GM12878 (cell line): ENCODE measurements at regions of chr22 and their contacts with region 1.

Region 1: GRCh38 chr22:41589391-41590241 is at the start of gene PMM1:
- DNase-seq: peak; percentile 98
- ATAC-seq: peak; percentile 98
- H3K4me3 ChIP-seq: peak within 1 kb of the TSS; percentile 94
- H3K27ac ChIP-seq: peak within 1 kb of the TSS; percentile 66
- H3K4me1 ChIP-seq: peaks cover 3% of the 10 kb centered on the region; the same call in 1 of the 2 replicates
- H3K27me3 ChIP-seq: no peaks in the 10 kb centered on the region
- CTCF ChIP-seq: no peak
- EP300 ChIP-seq: no peak
- POLR2A ChIP-seq: peak; percentile 96
- RAD21 ChIP-seq: no peak
- polyA plus RNA-seq, gene PMM1: 10.5 to 16.1 TPM

Region 2: DNA sequence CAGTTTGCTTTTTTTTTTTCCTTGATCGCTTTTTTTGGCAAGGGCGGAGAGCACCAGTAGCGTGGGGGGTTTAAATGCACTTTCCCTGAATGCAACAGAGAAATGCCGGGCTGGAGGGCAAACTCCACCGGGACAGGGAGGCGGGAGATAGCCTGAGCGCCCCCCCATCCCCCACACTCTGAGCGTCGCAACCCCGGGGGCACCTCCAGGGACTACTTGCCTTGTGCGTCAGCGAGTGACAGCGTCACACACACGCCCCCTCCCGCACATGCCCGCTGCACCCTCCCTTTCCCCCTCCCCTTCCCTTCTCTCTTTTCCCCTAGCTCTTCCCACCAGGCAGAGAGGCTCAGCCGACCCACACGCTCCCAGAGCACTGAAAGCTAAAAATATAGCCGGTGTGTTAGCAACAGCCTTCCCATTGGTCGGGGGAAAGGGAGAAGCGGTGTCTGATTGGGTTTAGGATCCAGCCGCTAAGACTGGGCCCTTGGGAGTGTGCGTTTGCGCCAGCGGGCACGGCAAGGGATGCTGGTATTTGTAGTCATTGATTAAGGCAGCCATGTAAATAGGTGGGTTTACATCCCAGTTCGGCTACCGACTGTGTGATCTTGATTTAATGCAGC is 141.3 kb before region 1 on chr22:
- CTCF ChIA-PET with region 1: no interaction called
- POLR2A ChIA-PET with region 1: interaction called, 14 read pairs
- RAD21 ChIA-PET with region 1: no interaction called
- SMC1A ChIA-PET with region 1: no interaction called
- in situ Hi-C with region 1: no loop called
- intact Hi-C with region 1: no loop called
- DNase-seq: peak; percentile 99
- ATAC-seq: peak; percentile 70
- H3K4me3 ChIP-seq: peak overlapping the region; percentile 86
- H3K27ac ChIP-seq: peak overlapping the region; percentile 88
- H3K4me1 ChIP-seq: no peaks in the 10 kb centered on the region
- H3K27me3 ChIP-seq: no peaks in the 10 kb centered on the region
- CTCF ChIP-seq: no peak
- EP300 ChIP-seq: peak; percentile 9 to 63; a peak in 2 of 4 replicates
- POLR2A ChIP-seq: no peak
- RAD21 ChIP-seq: no peak

Region 3: DNA sequence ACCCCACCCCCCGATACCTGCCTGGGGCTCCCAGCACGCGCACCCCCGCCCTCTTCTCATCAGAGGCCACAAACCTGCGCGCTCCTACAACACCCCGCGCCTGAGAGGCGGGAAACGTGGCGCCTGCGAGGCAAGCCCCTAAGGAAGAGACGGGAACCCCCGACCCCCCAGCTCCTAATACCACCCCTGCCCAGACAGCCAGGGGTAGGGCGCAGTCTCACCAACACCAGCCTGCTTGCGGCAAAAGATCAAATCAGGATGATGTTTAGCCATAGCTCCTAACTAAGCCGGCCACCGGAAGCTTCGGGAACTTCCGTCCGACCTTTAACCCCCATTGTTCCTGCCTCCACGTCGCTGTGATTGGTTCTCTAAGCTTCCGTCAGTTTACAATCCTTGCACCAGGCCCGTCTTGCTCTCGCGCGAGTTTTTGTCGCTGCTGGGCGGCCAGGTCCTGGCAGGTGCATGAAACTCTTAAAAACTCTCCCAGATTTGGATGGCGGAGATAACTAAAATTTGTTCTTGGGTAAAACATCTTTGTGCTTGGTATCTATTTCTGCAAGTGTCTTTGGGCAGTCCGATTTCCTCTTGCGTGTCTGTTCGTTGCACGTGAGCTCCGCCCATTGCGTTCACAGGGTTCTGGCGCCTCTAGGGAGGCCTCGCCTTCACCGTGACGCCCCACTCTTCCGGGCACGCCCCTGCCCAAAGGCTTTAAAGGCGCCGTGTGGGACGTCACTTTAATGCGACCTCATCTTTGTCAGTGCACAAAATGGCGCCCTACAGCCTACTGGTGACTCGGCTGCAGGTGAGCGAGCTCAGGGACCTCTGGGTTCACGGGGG is 121.0 kb before region 1 on chr22 and contains the starts of genes ACO2 and PHF5A:
- CTCF ChIA-PET with region 1: no interaction called
- POLR2A ChIA-PET with region 1: interaction called, 10 read pairs
- RAD21 ChIA-PET with region 1: no interaction called
- SMC1A ChIA-PET with region 1: no interaction called
- in situ Hi-C with region 1: no loop called
- intact Hi-C with region 1: no loop called
- DNase-seq: peak; percentile 98
- ATAC-seq: peak; percentile 95
- H3K4me3 ChIP-seq: peak within 1 kb of the TSS; percentile 80
- H3K27ac ChIP-seq: peak within 1 kb of the TSS; percentile 97
- H3K4me1 ChIP-seq: peaks cover 14% of the 10 kb centered on the region
- H3K27me3 ChIP-seq: no peaks in the 10 kb centered on the region
- CTCF ChIP-seq: no peak
- EP300 ChIP-seq: peak in 1 of 2 experiments; percentile 32; a peak in 1 of 4 replicates
- POLR2A ChIP-seq: peak; percentile 81
- RAD21 ChIP-seq: no peak
- polyA plus RNA-seq, gene ACO2: 21.4 to 22.3 TPM
- polyA plus RNA-seq, gene PHF5A: 40.5 to 77.0 TPM

Region 4: DNA sequence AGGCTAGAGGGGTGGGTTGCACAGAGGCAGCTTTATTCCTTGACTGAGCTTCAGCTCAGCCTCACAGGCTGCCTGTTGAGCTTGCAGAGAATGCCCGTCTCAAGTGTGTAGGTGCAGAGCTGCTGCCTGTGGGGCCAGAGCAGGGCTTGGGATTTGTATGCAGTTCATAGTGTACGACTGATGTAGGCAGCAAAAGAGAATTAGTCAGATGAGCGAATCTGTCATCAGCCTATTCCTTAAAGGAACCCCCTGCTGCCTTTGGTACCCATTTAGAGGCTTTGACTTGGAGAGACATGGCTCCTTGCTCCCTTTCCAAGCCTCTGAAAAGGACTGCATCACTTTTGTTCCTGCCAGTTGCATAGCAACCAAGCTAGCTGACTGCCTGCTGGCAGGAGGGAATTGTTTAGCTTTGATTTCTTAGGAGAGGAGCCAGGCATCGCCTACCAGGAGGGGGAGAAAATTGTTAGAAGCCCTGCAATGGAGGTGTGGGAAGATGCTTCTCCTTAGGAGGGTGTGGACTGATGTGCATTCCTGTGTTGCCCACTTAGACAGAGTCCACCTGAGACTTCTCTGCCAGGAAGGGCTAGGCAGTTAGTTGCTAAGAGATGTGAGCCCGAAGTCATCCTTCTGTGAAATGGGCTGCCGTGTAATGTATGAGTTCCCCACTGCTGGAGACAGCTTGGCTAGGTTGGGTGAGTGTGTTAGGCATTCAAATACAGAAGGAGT is 109.8 kb before region 1 on chr22:
- CTCF ChIA-PET with region 1: no interaction called
- POLR2A ChIA-PET with region 1: interaction called, 11 read pairs
- RAD21 ChIA-PET with region 1: interaction called, 3 read pairs
- SMC1A ChIA-PET with region 1: no interaction called
- in situ Hi-C with region 1: no loop called
- intact Hi-C with region 1: no loop called
- DNase-seq: no peak
- ATAC-seq: no peak; the same call in 2 of the 3 replicates
- H3K4me3 ChIP-seq: no peak overlapping the region
- H3K27ac ChIP-seq: peak overlapping the region; percentile 52
- H3K4me1 ChIP-seq: peaks cover 60% of the 10 kb centered on the region
- H3K27me3 ChIP-seq: no peaks in the 10 kb centered on the region
- CTCF ChIP-seq: no peak
- EP300 ChIP-seq: no peak
- POLR2A ChIP-seq: no peak
- RAD21 ChIP-seq: no peak

Region 5: GRCh38 chr22:41543854-41544670 is 45.6 kb before region 1 on chr22 and contains the start of gene POLR3H:
- CTCF ChIA-PET with region 1: interaction called, 29 read pairs
- POLR2A ChIA-PET with region 1: interaction called, 11 read pairs
- RAD21 ChIA-PET with region 1: interaction called, 14 read pairs
- SMC1A ChIA-PET with region 1: interaction called, 15 read pairs
- in situ Hi-C with region 1: no loop called
- intact Hi-C with region 1: no loop called
- DNase-seq: peak; percentile 90
- ATAC-seq: peak; percentile 97
- H3K4me3 ChIP-seq: peak within 1 kb of the TSS; percentile 88
- H3K27ac ChIP-seq: peak within 1 kb of the TSS; percentile 75
- H3K4me1 ChIP-seq: no peaks in the 10 kb centered on the region
- H3K27me3 ChIP-seq: no peaks in the 10 kb centered on the region
- CTCF ChIP-seq: peak; percentile 61 to 86 (median 77)
- EP300 ChIP-seq: no peak
- POLR2A ChIP-seq: peak; percentile 73
- RAD21 ChIP-seq: peak; percentile 28; the same call in 1 of the 2 replicates
- polyA plus RNA-seq, gene POLR3H: 3.5 to 5.8 TPM

Region 6: DNA sequence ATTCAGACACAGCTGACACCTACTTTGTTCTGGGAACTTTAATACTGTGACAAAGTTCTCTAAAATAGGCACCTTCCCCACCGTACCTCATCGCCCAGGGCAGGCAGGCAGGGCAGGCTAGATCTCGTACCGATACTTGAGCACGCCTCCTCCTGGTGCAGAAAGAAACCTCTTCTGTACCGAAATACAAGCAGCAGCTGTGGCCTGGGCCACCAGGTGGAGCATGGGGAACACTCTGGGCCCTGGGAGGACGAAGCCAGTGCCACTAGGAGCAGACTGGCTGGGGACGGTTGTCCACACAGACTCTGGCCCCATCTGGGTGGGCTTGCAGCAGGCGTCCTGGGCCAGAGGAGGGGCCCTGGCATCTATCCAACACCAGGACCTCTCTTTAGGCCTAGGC is 12.7 kb before region 1 on chr22:
- CTCF ChIA-PET with region 1: interaction called, 12 read pairs
- POLR2A ChIA-PET with region 1: interaction called, 12 read pairs
- RAD21 ChIA-PET with region 1: interaction called, 6 read pairs
- SMC1A ChIA-PET with region 1: no interaction called
- in situ Hi-C with region 1: no loop called
- intact Hi-C with region 1: no loop called
- DNase-seq: no peak
- ATAC-seq: peak; percentile 92
- H3K4me3 ChIP-seq: no peak overlapping the region
- H3K27ac ChIP-seq: no peak overlapping the region
- H3K4me1 ChIP-seq: no peaks in the 10 kb centered on the region
- H3K27me3 ChIP-seq: no peaks in the 10 kb centered on the region
- CTCF ChIP-seq: peak; percentile 62 to 84 (median 76)
- EP300 ChIP-seq: no peak
- POLR2A ChIP-seq: no peak
- RAD21 ChIP-seq: peak; percentile 66

Region 7: DNA sequence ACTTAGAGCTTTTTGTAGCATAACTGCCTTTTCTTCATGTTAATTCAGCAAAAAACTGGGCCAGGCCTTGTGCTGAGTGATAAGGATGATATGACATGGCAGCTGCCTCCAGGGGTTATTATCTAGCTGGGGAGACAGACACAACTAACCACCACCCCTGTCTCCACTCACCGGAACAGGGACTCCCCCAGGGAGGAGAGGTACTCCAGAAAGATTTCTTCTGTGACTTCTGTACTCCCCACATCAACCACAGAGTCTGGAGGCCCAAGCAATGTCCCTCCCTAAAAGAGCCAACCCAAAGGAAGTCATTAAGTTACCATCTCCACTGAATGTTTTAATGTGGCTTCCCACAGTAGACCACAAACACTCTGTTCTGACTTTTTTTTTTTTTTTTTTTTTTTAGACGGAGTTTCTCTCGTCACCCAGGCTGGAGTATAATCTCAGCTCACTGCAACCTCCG is 14.3 kb after region 1 on chr22:
- CTCF ChIA-PET with region 1: interaction called, 7 read pairs
- POLR2A ChIA-PET with region 1: interaction called, 13 read pairs
- RAD21 ChIA-PET with region 1: interaction called, 15 read pairs
- SMC1A ChIA-PET with region 1: interaction called, 22 read pairs
- in situ Hi-C with region 1: no loop called
- intact Hi-C with region 1: no loop called
- DNase-seq: peak; percentile 91
- ATAC-seq: peak; percentile 99
- H3K4me3 ChIP-seq: no peak overlapping the region
- H3K27ac ChIP-seq: no peak overlapping the region
- H3K4me1 ChIP-seq: peaks cover 21% of the 10 kb centered on the region
- H3K27me3 ChIP-seq: no peaks in the 10 kb centered on the region
- CTCF ChIP-seq: no peak
- EP300 ChIP-seq: peak in 1 of 2 experiments; percentile 79; a peak in 1 of 4 replicates
- POLR2A ChIP-seq: no peak
- RAD21 ChIP-seq: no peak